HCT116 (cell line): ENCODE measurements at regions of chr19 and their contacts with region 1.

Region 1: DNA sequence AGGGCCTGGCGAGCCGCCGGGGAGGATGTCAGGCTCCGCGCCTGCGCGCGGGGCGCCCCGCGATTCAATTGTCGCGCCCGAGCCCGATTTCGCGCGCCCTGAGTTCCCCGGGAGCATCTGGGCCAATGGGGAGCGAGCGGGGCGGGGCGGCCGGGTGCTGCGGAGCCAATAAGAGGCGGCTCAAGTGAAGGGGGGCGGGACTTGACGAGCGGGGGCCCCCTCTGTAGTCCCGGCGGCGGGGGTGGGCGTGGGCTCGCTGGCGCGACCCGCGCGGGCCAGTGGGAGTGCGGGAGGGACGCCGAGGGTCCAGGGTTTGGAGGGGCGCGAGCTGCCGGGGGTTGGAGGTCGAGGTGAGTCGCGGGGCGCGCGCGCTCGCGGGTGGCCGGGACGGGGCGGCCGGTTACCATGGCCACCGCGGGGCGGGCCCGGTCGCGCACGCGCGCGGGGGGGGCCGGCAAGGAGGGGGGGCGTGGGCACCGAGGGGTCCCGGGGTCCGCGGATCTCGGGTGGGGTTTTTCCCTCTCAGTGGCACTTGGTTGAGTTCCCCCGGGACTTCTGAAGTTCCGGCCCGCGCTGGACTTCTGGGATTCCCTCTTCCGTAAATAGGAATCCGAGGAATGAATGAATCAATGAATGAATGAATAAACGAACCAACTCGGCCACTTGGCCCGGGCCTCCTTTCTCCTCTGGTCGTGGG is 744 bp downstream of the UHRF1 start:
- DNase-seq: peak; percentile 68
- ATAC-seq: peak; percentile 74
- H3K4me3 ChIP-seq: peak overlapping the region; percentile 55 to 90
- H3K27ac ChIP-seq: peak overlapping the region; percentile 98
- H3K4me1 ChIP-seq: peaks cover 50 to 60% of the 10 kb centered on the region in 2 experiments
- H3K27me3 ChIP-seq: no peaks in the 10 kb centered on the region
- CTCF ChIP-seq: no peak
- POLR2A ChIP-seq: no peak
- RAD21 ChIP-seq: no peak

Region 2: DNA sequence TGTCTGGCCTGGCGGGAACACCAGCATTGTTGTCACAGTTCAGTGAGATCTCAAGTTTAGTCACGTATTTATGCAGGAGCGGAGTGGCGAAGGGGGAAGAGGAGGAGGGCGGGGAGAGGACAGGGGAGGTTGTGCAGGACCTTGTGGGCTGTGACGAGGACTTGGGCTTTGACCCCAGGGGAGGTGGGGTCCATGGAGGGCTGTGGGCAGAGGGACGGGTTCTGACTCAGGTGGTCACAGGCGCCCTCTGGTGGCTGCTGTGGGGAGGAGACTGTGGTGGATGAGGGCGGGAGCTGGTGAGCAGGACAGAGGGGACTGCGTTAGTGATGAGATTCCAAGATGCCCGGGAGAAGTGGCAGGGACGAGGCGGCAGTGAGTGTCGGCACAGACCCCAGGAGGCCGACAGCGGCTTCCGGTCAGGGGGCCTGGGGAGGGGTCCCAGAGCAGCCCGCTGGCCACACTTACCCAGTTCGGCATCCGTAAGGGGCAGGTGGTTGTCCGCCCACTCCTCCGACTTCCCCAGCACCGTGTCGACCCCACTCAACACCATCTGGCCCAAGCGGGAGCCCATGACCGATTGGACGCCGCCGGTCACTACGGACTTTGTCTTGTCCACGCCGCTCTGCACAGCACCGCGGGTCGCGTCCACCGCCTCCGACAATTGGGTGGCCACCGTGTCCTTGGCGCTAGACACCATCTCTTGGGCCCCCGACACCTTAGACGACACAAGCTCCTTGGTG is 58.3 kb before region 1 on chr19:
- CTCF ChIA-PET with region 1: interaction called, 13 read pairs
- POLR2A ChIA-PET with region 1: no interaction called
- RAD21 ChIA-PET with region 1: interaction called in 1 of 2 experiments, 3 read pairs
- intact Hi-C with region 1: no loop called
- DNase-seq: no peak
- ATAC-seq: peak; percentile 95
- H3K4me3 ChIP-seq: no peak overlapping the region
- H3K27ac ChIP-seq: no peak overlapping the region
- H3K4me1 ChIP-seq: no peaks in the 10 kb centered on the region
- H3K27me3 ChIP-seq: no peaks in the 10 kb centered on the region
- CTCF ChIP-seq: peak; percentile 44 to 87 (median 87)
- POLR2A ChIP-seq: no peak
- RAD21 ChIP-seq: peak; percentile 71

Region 3: DNA sequence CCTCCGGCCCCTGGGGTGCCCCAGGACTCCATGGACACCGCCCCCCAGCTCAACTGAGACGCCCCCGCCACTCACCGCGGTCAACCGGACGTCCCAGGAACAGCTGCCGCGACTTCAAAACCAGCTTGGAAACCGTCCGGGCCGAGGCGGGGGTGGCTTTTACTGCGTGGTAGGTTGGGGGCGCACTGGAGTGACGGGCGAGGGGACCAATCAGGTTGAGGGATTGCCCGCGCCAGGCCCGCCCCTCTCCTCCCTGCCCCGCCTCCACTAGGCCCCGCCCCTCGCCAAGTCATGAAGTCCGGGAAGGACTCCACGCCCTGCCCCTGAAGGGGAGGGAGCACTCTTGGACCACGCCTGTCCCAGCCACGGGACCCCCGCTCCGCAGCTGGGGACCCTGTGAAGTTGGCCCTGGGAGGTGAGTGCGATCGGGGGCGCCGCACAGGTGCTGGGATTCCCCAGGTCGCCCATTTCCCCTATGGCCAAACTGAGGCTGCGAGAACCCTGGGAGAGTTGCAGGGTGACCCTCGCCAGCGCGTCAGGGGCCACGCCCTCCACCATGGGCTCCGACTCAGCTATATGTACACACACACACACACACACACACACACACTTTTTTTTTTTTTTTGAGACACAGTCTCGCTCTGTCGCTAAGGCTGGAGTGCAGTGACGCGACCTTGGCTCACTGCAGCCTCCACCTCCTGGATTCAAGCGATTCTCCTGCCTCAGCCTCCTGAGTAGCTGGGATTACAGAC is 42.3 kb before region 1 on chr19 and contains the start of gene PLIN3:
- CTCF ChIA-PET with region 1: interaction called, 55 read pairs
- POLR2A ChIA-PET with region 1: interaction called, 54 read pairs
- RAD21 ChIA-PET with region 1: interaction called, 8 to 9 read pairs
- intact Hi-C with region 1: loop called (anchors 1 kb)
- DNase-seq: peak; percentile 88
- ATAC-seq: peak; percentile 72
- H3K4me3 ChIP-seq: peak within 1 kb of the TSS; percentile 94 to 96
- H3K27ac ChIP-seq: peak within 1 kb of the TSS; percentile 95
- H3K4me1 ChIP-seq: peaks cover 49 to 76% of the 10 kb centered on the region in 2 experiments
- H3K27me3 ChIP-seq: no peaks in the 10 kb centered on the region
- CTCF ChIP-seq: no peak
- POLR2A ChIP-seq: no peak
- RAD21 ChIP-seq: no peak
- total RNA-seq, gene PLIN3: 207 TPM

Region 4: GRCh38 chr19:4873930-4874329 is 36.1 kb before region 1 on chr19:
- CTCF ChIA-PET with region 1: interaction called, 55 read pairs
- POLR2A ChIA-PET with region 1: interaction called, 54 read pairs
- RAD21 ChIA-PET with region 1: interaction called, 8 to 9 read pairs
- intact Hi-C with region 1: loop called (anchors 1 kb)
- DNase-seq: no peak
- ATAC-seq: no peak
- H3K4me3 ChIP-seq: no peak overlapping the region
- H3K27ac ChIP-seq: no peak overlapping the region
- H3K4me1 ChIP-seq: peaks cover 30 to 48% of the 10 kb centered on the region in 2 experiments
- H3K27me3 ChIP-seq: no peaks in the 10 kb centered on the region
- CTCF ChIP-seq: no peak
- POLR2A ChIP-seq: no peak
- RAD21 ChIP-seq: no peak

Region 5: DNA sequence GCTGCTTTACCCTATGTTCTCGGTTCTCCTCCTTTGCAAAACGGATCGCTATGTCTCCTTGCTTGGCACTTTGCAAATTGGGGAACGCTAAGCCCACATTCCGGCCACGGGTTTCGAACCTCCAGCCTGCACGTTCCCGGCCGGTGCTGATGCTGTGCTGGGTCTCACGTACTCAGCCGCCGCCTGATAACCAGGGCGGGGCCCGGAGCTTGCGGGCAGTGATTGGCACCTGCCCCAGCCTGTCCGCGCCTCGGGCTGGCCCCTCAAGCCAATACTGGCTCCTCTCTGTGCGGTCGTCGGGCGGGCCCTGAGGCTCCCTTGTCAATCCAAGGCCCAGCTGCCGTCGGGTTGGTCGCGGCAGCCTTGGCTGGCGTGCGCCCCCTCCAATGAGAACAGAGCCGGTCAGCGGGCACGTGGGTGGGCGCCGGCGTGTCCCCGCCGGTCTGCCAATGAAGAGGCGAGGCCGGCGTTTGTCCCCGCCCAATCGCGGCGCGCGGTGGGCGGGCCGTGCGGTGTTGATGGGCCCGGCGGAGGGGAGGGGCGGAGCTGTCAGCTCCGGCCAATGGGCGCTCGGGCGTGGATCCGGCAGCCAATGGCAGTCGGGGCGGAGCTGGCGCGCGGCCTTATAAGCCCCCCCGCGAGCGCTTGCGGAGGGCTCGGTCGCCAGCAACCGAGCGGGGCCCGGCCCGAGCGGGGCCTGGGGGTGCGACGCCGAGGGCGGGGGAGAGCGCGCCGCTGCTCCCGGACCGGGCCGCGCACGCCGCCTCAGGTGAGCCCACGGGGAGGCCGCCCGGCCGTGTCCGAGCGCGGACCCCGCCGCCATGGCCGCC is 58.6 kb after region 1 on chr19 and contains the start of gene KDM4B:
- CTCF ChIA-PET with region 1: no interaction called
- POLR2A ChIA-PET with region 1: interaction called, 5 read pairs
- RAD21 ChIA-PET with region 1: no interaction called
- intact Hi-C with region 1: loop called (anchors 5 kb)
- DNase-seq: peak; percentile 98
- ATAC-seq: peak; percentile 92
- H3K4me3 ChIP-seq: peak within 1 kb of the TSS; percentile 67 to 76
- H3K27ac ChIP-seq: peak within 1 kb of the TSS; percentile 76
- H3K4me1 ChIP-seq: peaks cover 44 to 64% of the 10 kb centered on the region in 2 experiments
- H3K27me3 ChIP-seq: no peaks in the 10 kb centered on the region
- CTCF ChIP-seq: no peak
- POLR2A ChIP-seq: peak; percentile 78
- RAD21 ChIP-seq: no peak
- total RNA-seq, gene KDM4B: 35.9 TPM